Left ventricle myocardium superior (tissue), 1 donor: ENCODE measurements at regions of chr18 and their contacts with region 1.

Region 1: GRCh38 chr18:27419646-27420045 is 234.5 kb upstream of the CHST9 start:
- DNase-seq: no peak
- ATAC-seq: no peak

Region 2: DNA sequence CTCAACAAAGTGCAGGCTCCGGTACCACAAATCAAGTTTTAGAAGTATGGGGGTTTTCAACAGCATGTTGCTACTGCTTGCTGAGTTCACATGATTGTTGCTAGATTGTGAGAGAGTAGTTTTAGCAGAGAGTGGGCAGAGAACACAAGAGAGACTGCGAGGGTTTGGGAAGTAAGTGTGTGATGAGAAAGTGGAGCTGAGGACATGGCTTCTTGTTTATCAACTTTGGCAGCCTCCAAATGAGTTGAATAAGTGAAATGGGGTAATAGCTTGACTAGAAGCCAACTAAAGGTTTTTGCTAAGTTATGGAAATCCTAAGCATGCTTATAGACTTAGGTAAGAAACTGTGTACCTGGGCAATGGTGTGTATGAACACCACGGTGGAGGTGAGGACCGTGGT is 369.7 kb before region 1 on chr18:
- intact Hi-C with region 1: no loop called
- DNase-seq: no peak
- ATAC-seq: peak; percentile 55

Region 3: DNA sequence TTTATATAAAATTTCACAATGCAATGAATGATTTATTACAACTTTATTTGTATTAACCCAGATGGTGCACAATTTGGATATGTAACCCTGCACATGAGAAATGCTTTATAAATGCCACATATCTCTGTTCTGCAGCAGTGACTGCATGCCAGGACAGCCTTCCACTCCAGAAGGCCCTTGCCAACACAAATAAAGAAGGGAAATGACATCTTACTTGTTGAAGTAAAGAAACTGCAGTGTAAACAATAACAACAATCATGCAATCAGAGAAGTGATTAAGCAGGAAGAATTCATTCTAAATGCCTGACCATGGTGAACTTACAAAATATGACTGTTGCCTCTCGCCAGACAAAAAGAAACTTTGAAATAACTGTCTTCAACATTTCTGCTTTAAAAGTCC is 104.7 kb before region 1 on chr18:
- intact Hi-C with region 1: no loop called
- DNase-seq: no peak
- ATAC-seq: no peak

Region 4: GRCh38 chr18:27331606-27332005 is 88.0 kb before region 1 on chr18:
- intact Hi-C with region 1: loop called (anchors 2 kb)
- DNase-seq: no peak
- ATAC-seq: no peak